ENCODE measurements at regions of chr18 and their contacts with region 1.

Region 1: GRCh38 chr18:12934454-12935071 is 13.2 kb upstream of the SEH1L start:
- DNase-seq: peak; percentile 65
- H3K4me3 Mint-ChIP-seq: peak overlapping the region; percentile 17
- H3K27ac Mint-ChIP-seq: no peak overlapping the region
- H3K4me1 Mint-ChIP-seq: peaks cover 4% of the 10 kb centered on the region
- H3K27me3 Mint-ChIP-seq: peaks cover 16% of the 10 kb centered on the region

Region 2: DNA sequence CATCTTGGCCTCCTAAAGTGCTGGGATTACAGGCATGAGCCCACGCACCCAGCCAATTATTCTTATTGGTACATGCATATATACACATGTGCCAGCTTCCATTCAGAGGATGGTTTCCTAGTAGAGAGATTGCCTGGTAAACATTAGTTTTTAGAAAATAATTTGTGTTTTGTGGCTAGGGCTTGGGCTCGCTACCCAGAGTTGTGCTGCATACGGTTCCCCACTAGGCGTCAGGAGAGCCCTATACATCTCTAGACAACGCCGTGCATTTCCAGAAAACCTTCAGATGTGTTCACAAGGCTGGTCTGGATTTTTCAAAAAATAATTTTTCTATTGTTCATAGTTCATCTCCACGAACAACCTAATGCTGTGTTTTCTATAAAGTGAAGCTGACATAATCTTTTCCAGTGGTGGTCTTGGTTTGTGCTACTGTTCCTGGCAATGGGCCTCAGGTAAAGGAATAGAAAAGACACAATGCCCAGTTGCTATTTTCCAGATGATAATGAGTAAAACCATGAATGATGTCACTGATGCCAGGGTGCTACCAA is 542.9 kb before region 1 on chr18:
- intact Hi-C with region 1: loop called (anchors 10 kb)
- DNase-seq: no peak
- H3K4me3 Mint-ChIP-seq: no peak overlapping the region
- H3K27ac Mint-ChIP-seq: no peak overlapping the region
- H3K4me1 Mint-ChIP-seq: no peaks in the 10 kb centered on the region
- H3K27me3 Mint-ChIP-seq: peaks cover 9% of the 10 kb centered on the region

Region 3: DNA sequence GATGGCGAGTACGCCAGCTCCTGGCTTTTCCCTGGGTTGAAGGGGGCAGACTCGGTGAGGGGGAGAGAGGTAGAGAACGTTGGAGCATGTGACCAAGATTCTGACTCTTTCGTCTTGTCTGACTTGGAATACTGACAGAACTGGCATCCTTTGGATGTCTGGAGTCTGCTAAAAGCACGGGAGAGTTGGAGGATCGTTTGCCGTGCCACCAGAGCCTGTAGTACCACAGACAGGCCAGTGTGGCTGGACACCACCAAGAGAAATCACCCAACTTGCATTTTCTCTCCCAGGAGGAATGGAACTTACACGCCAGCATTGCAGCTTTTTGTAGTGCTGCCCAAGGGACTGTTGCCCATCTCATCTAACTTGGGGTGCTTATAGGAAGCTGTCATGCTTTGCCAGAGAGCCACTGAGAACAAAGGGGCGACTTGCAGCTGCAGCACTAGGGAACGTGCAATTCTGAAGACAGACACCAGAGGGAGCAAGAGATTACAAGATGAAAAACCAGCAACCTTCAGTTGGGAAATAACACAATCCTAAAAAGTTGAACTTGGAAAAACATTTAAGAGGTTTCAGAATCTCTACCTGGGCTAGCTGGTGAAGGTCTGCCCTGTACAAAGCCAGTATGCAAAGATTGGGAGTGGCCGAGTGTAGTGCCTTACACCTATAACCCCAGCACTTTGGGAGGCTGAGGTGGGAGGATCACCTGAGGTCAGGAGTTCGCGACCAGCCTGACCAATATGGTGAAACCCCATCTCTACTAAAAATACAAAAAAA is 207.6 kb before region 1 on chr18:
- intact Hi-C with region 1: loop called (anchors 1 kb)
- DNase-seq: peak; percentile 44
- H3K4me3 Mint-ChIP-seq: no peak overlapping the region
- H3K27ac Mint-ChIP-seq: no peak overlapping the region
- H3K4me1 Mint-ChIP-seq: peaks cover 4% of the 10 kb centered on the region
- H3K27me3 Mint-ChIP-seq: no peaks in the 10 kb centered on the region

Region 4: DNA sequence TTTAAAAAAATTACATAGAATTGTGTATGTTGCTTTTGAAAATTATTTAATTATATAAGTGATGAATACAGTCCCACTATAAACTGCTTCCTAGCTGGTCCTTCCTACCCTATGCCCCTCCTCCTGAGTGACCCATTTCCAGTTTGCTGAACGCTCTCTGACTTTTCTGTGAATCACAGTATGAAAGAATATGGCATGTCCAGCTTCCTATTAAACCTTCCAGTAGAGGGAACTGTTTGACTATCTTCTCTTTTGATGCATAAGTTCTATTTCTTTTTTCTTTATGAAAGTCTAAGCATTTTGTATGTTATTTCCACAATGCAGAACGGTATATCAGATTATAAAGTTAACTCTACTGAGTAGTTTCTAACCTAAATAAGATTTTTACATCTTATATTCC is 190.5 kb before region 1 on chr18:
- intact Hi-C with region 1: loop called (anchors 1 kb)
- DNase-seq: no peak
- H3K4me3 Mint-ChIP-seq: no peak overlapping the region
- H3K27ac Mint-ChIP-seq: no peak overlapping the region
- H3K4me1 Mint-ChIP-seq: peaks cover 12% of the 10 kb centered on the region
- H3K27me3 Mint-ChIP-seq: no peaks in the 10 kb centered on the region

Region 5: GRCh38 chr18:12838178-12838634 is 96.4 kb before region 1 on chr18:
- intact Hi-C with region 1: no loop called
- DNase-seq: no peak
- H3K4me3 Mint-ChIP-seq: peak overlapping the region; percentile 68
- H3K27ac Mint-ChIP-seq: peak overlapping the region; percentile 80
- H3K4me1 Mint-ChIP-seq: peaks cover 61% of the 10 kb centered on the region
- H3K27me3 Mint-ChIP-seq: no peaks in the 10 kb centered on the region

Region 6: DNA sequence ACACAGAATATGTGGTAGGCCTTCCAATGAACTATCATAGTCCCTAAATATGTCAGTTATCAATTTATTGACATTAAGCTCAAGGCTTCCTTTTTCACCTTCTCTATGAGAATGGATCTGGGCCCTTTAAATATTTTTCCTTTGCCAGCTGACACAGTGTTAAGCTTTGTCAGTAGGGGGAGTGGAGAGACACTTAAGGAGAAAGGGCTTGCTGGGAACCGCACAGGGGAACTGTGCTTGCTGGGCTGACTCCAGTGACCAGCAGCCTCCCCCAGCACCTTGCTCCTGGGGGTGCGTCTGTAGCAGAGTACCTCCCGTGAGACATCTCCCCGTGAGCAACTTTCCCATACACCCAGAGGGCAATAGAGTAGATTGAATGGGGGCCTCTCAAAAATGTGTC is 44.1 kb before region 1 on chr18:
- intact Hi-C with region 1: loop called (anchors 5 kb)
- DNase-seq: no peak
- H3K4me3 Mint-ChIP-seq: no peak overlapping the region
- H3K27ac Mint-ChIP-seq: no peak overlapping the region
- H3K4me1 Mint-ChIP-seq: peaks cover 12% of the 10 kb centered on the region
- H3K27me3 Mint-ChIP-seq: peaks cover 4% of the 10 kb centered on the region

Measured in activated T-helper 2 cell treated with anti-CD3 and anti-CD28 coated beads, Interferon-gamma antibody, Interleukin-2, Interleukin-4, amounts not matched to agents 10 μg/mL and 5 μg/mL and 100 μg/mL, durations not matched to agents 14 hours and 24 hours and 36 hours (primary cell).